Mammary epithelial cell (primary cell): ENCODE measurements at regions of chr6 and their contacts with region 1.

Region 1: GRCh38 chr6:56370561-56371211 is 123.3 kb upstream of the COL21A1 start:
- DNase-seq: peak; percentile 92
- H3K4me3 ChIP-seq: peak overlapping the region in 2 of 3 experiments; percentile 3 to 7
- H3K27ac ChIP-seq: peak overlapping the region; percentile 67
- H3K4me1 ChIP-seq: peaks cover 37% of the 10 kb centered on the region
- H3K27me3 ChIP-seq: no peaks in the 10 kb centered on the region
- CTCF ChIP-seq: no peak

Region 2: GRCh38 chr6:56417827-56418226 is 47.1 kb after region 1 on chr6:
- CTCF ChIA-PET with region 1: interaction called, 5 read pairs
- dilution Hi-C with region 1: no loop called
- in situ Hi-C with region 1: no loop called
- intact Hi-C with region 1: loop called (anchors 1 kb)
- DNase-seq: no peak
- H3K4me3 ChIP-seq: no peak overlapping the region
- H3K27ac ChIP-seq: no peak overlapping the region
- H3K4me1 ChIP-seq: no peaks in the 10 kb centered on the region
- H3K27me3 ChIP-seq: no peaks in the 10 kb centered on the region
- CTCF ChIP-seq: peak; percentile 11 to 37

Region 3: DNA sequence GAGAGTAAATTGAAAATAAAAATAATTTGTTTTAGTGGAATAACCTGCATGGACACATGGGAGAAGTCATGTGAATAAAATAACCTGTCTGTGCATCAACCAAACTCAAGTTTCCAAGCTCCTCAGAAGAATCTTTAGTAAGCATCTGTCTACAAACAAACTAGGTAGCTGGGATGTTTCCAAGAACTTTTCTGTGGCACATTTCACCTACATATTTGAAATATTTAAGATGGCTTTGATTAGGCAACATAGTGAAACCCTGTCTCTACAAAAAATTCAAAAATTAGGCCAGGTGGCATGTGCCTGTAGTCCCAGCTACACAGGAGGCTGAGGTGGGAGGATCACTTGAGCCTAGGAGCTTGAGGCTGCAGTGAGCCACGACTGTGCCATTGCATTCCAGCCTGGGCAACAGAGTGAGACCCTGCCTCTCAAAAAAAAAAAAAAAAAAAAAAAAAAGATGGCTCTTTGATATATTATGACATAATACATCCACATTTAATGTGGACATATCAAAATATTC is 103.9 kb after region 1 on chr6:
- CTCF ChIA-PET with region 1: no interaction called
- dilution Hi-C with region 1: no loop called
- in situ Hi-C with region 1: no loop called
- intact Hi-C with region 1: loop called (anchors 5 kb)
- DNase-seq: no peak
- H3K4me3 ChIP-seq: no peak overlapping the region
- H3K27ac ChIP-seq: no peak overlapping the region
- H3K4me1 ChIP-seq: no peaks in the 10 kb centered on the region
- H3K27me3 ChIP-seq: no peaks in the 10 kb centered on the region
- CTCF ChIP-seq: no peak

Region 4: DNA sequence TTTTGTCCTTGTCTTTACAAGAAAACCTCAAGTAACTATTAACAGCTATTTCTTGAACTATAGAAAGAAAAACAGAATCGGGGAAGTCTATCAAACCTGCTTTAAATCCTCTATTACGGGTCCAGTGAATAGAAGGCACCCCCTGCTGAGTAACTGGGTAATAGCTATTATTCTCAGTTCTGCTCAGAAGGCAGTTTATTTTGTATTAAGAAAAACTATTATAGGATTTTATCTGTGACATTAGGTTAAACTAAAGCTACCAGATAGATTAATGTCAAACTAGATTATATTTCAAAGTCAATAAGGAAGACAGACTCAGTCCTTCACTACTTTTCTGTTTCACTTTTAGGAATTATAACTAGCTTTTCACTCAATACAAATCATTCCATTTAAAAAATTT is 178.3 kb after region 1 on chr6:
- CTCF ChIA-PET with region 1: interaction called, 3 read pairs
- dilution Hi-C with region 1: no loop called
- in situ Hi-C with region 1: no loop called
- intact Hi-C with region 1: loop called (anchors 1 kb)
- DNase-seq: no peak
- H3K4me3 ChIP-seq: no peak overlapping the region
- H3K27ac ChIP-seq: no peak overlapping the region
- H3K4me1 ChIP-seq: no peaks in the 10 kb centered on the region
- H3K27me3 ChIP-seq: no peaks in the 10 kb centered on the region
- CTCF ChIP-seq: no peak

Region 5: DNA sequence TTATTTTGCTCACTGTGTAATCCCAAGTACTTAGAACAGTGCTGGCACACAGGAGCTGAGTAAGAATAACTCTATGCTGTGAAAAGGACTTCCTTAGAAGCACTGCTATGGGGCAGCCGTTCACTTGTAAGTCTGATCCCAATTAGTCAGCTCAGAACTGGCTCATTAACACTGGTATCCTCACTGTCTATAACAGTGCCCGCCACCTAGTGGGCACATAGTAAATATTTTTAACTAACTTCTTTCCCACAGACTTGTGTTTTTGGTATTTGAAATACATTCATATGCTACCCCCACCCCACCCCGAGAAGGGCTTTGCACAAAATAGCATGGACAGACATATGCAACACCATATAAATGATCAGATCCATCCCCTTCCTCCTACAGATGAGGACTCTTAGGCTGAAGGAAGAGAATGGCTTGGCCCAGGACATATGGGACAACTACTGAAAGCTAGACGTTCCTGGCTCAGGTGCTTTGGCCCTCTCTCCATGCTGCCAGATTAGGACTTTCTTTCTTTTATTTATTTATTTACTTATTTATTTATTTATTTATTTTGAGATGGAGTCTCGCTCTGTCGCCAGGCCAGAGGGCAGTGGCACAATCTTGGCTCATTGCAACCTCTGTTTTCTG is 224.9 kb after region 1 on chr6:
- CTCF ChIA-PET with region 1: interaction called, 3 read pairs
- dilution Hi-C with region 1: loop called (anchors 5 kb)
- in situ Hi-C with region 1: no loop called
- intact Hi-C with region 1: loop called (anchors 5 kb)
- DNase-seq: peak; percentile 29
- H3K4me3 ChIP-seq: no peak overlapping the region
- H3K27ac ChIP-seq: no peak overlapping the region
- H3K4me1 ChIP-seq: no peaks in the 10 kb centered on the region
- H3K27me3 ChIP-seq: no peaks in the 10 kb centered on the region
- CTCF ChIP-seq: peak; percentile 56 to 61